ENCODE measurements at regions of chr13 and their contacts with region 1.

Region 1: DNA sequence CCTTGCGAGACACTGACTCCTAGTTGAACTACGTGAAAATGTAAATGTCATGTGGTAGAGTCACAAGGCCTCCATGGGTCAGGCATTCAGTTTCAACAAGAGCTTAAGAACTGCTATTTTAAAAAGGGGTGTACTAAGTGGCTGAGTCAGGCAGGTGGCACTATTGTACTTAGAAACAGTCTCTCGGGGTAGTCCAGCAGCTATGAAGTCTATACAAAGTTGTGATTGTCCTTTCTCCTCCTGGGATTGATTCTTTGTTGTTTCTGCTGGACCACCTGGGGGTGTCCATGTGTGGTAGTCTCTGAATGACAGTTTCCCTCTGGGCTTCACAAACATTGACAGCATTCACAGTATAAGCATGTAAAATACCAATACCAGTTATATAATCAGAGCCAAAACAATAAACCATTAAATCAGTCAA is 33.0 kb downstream of the UGGT2 start:
- DNase-seq: peak; percentile 75
- ATAC-seq: peak; percentile 96
- H3K4me3 ChIP-seq: no peak overlapping the region
- H3K27ac ChIP-seq: no peak overlapping the region
- H3K4me1 ChIP-seq: peaks cover 16% of the 10 kb centered on the region
- H3K27me3 ChIP-seq: no peaks in the 10 kb centered on the region
- CTCF ChIP-seq: peak; percentile 83
- EP300 ChIP-seq: no peak
- POLR2A ChIP-seq: no peak
- RAD21 ChIP-seq: peak; percentile 74

Region 2: DNA sequence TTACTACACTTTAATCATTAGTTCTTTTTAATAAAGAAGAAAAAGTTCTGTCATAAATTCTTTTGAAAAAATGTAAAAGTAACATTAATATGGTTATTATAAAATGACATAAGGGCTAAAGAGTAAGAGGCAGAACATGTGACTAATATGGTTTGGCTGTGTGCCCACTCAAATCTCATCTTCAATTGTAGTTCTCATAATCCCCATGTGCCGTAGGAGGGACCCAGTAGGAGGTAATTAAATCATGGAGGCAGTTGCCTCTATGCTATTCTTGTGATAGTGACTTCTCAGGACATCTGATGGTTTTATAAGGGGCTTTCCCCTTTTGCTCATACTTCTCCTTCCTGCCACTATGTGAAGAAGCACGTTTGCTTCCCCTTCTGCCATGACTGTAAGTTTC is 71.5 kb before region 1 on chr13:
- CTCF ChIA-PET with region 1: no interaction called
- POLR2A ChIA-PET with region 1: no interaction called
- in situ Hi-C with region 1: no loop called
- intact Hi-C with region 1: no loop called
- DNase-seq: no peak
- ATAC-seq: no peak
- H3K4me3 ChIP-seq: no peak overlapping the region
- H3K27ac ChIP-seq: no peak overlapping the region
- H3K4me1 ChIP-seq: no peaks in the 10 kb centered on the region
- H3K27me3 ChIP-seq: no peaks in the 10 kb centered on the region
- CTCF ChIP-seq: no peak
- EP300 ChIP-seq: no peak
- POLR2A ChIP-seq: no peak
- RAD21 ChIP-seq: no peak

Region 3: GRCh38 chr13:96041326-96042110 is 21.4 kb after region 1 on chr13:
- CTCF ChIA-PET with region 1: no interaction called
- POLR2A ChIA-PET with region 1: no interaction called
- in situ Hi-C with region 1: no loop called
- intact Hi-C with region 1: no loop called
- DNase-seq: peak; percentile 4
- ATAC-seq: no peak; the same call in 2 of the 3 replicates
- H3K4me3 ChIP-seq: no peak overlapping the region
- H3K27ac ChIP-seq: no peak overlapping the region
- H3K4me1 ChIP-seq: 0 out of 2 replicates have a peak, but pooled peaks cover 8% of the 10 kb centered on the region
- H3K27me3 ChIP-seq: no peaks in the 10 kb centered on the region
- CTCF ChIP-seq: no peak
- EP300 ChIP-seq: no peak
- POLR2A ChIP-seq: no peak
- RAD21 ChIP-seq: no peak

Region 4: DNA sequence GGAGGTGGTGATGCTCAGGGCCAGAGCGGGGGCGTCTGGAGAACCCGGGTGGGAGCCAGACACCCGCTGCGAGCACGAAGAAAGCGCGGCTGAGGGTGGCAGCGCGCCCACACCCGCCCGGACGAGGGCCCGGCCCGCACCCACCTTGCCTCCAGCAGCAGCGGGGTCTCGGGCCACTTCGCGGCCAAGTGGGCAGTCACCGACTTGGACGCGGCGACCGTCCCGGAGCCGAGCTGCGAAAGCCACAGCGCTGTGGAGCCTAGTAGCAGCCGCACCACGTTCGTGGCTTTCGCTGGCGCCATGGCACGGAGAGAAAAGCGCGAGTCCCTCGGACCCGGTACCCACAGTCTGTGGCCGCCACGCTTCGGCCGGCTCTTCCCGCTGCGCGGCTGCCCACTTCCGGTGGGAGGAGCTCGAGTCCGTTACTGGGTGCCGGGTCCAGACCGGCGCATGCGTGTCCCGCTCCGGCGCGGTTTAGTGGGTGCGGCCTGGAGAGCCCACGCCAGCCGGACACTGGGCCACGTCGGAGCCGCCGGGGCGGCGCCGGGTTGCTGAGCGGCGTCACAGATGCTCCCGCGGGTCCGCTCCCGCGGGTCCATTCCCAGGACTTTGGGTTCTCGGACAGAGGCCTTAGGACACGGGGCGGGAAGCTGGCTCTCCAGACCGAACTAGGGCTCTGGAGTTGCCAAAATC is 33.0 kb after region 1 on chr13 and contains the start of gene UGGT2:
- CTCF ChIA-PET with region 1: no interaction called
- POLR2A ChIA-PET with region 1: interaction called, 11 read pairs
- in situ Hi-C with region 1: no loop called
- intact Hi-C with region 1: no loop called
- DNase-seq: peak; percentile 85
- ATAC-seq: peak; percentile 99
- H3K4me3 ChIP-seq: peak within 1 kb of the TSS; percentile 91 to 100 (median 97)
- H3K27ac ChIP-seq: peak within 1 kb of the TSS; percentile 68
- H3K4me1 ChIP-seq: peaks cover 8% of the 10 kb centered on the region
- H3K27me3 ChIP-seq: no peaks in the 10 kb centered on the region; a peak in 1 of 5 replicates
- CTCF ChIP-seq: peak; percentile 33
- EP300 ChIP-seq: 0 out of 4 replicates have a peak, but pooled peaks of 1 of the 2 experiments have one; percentile 44
- POLR2A ChIP-seq: peak; percentile 87 to 91
- RAD21 ChIP-seq: peak; percentile 40; the same call in 1 of the 2 replicates
- total RNA-seq, gene UGGT2: 14.9 and 27.1 TPM in 2 replicates

Region 5: GRCh38 chr13:96075953-96076543 is 55.9 kb after region 1 on chr13:
- CTCF ChIA-PET with region 1: interaction called, 14 read pairs
- POLR2A ChIA-PET with region 1: no interaction called
- in situ Hi-C with region 1: no loop called
- intact Hi-C with region 1: loop called (anchors 1 kb)
- DNase-seq: peak; percentile 12
- ATAC-seq: peak; percentile 33; the same call in 2 of the 3 replicates
- H3K4me3 ChIP-seq: no peak overlapping the region
- H3K27ac ChIP-seq: no peak overlapping the region
- H3K4me1 ChIP-seq: no peaks in the 10 kb centered on the region
- H3K27me3 ChIP-seq: no peaks in the 10 kb centered on the region
- CTCF ChIP-seq: peak; percentile 37
- EP300 ChIP-seq: no peak
- POLR2A ChIP-seq: no peak
- RAD21 ChIP-seq: no peak

Region 6: GRCh38 chr13:96119921-96120320 is 99.8 kb after region 1 on chr13:
- CTCF ChIA-PET with region 1: no interaction called
- POLR2A ChIA-PET with region 1: no interaction called
- in situ Hi-C with region 1: no loop called
- intact Hi-C with region 1: no loop called
- DNase-seq: no peak
- ATAC-seq: no peak
- H3K4me3 ChIP-seq: no peak overlapping the region
- H3K27ac ChIP-seq: no peak overlapping the region
- H3K4me1 ChIP-seq: no peaks in the 10 kb centered on the region
- H3K27me3 ChIP-seq: no peaks in the 10 kb centered on the region; a peak in 2 of 5 replicates
- CTCF ChIP-seq: no peak
- EP300 ChIP-seq: no peak
- POLR2A ChIP-seq: no peak
- RAD21 ChIP-seq: no peak

Region 7: GRCh38 chr13:96229356-96229755 is 209.2 kb after region 1 on chr13:
- CTCF ChIA-PET with region 1: interaction called, 18 read pairs
- POLR2A ChIA-PET with region 1: no interaction called
- in situ Hi-C with region 1: loop called (anchors 10 kb)
- intact Hi-C with region 1: loop called (anchors 1 kb)
- DNase-seq: peak; percentile 21
- ATAC-seq: peak; percentile 90
- H3K4me3 ChIP-seq: no peak overlapping the region
- H3K27ac ChIP-seq: no peak overlapping the region
- H3K4me1 ChIP-seq: no peaks in the 10 kb centered on the region
- H3K27me3 ChIP-seq: no peaks in the 10 kb centered on the region
- CTCF ChIP-seq: peak; percentile 55
- EP300 ChIP-seq: no peak
- POLR2A ChIP-seq: no peak
- RAD21 ChIP-seq: no peak

Region 8: GRCh38 chr13:96817336-96817941 is 797.3 kb after region 1 on chr13:
- CTCF ChIA-PET with region 1: interaction called, 6 read pairs
- POLR2A ChIA-PET with region 1: interaction called, 3 read pairs
- in situ Hi-C with region 1: no loop called
- intact Hi-C with region 1: loop called (anchors 1 kb)
- DNase-seq: peak; percentile 6
- ATAC-seq: no peak
- H3K4me3 ChIP-seq: no peak overlapping the region
- H3K27ac ChIP-seq: no peak overlapping the region
- H3K4me1 ChIP-seq: no peaks in the 10 kb centered on the region
- H3K27me3 ChIP-seq: no peaks in the 10 kb centered on the region
- CTCF ChIP-seq: no peak
- EP300 ChIP-seq: no peak
- POLR2A ChIP-seq: no peak
- RAD21 ChIP-seq: 0 out of 2 replicates have a peak, but pooled peaks have one; percentile 13

Region 9: DNA sequence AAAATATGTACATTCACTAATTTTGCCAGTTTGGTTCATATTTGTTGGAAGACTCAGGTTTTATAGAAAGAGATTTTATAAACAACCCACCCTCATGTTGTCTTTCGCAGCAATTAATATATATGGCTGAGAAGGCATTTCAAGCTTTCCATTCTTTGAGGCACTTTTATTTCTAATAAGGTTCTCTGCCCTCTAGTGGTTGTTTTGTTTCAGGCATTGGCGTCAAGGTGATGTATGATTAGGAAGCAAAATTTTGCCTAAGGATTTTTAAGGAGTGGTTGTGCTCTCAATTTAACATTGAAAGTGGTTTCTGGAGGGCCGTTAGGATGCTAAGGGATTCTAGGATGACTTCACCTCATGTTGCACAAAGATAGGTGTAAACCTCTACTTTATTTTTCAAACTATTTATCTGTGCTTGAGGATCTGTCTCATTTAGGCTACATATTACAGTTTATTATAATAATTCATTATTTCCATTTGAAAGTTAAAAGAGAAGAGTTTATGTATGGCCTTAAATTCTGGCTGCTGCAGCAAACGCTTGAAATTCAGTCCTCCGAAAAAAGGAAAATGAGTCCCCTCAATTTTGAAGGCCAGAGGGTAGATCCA is 938.2 kb after region 1 on chr13:
- CTCF ChIA-PET with region 1: interaction called, 6 read pairs
- POLR2A ChIA-PET with region 1: no interaction called
- in situ Hi-C with region 1: loop called (anchors 25 kb)
- intact Hi-C with region 1: loop called (anchors 2 kb)
- DNase-seq: peak; percentile 20
- ATAC-seq: peak; percentile 36; the same call in 1 of the 3 replicates
- H3K4me3 ChIP-seq: no peak overlapping the region
- H3K27ac ChIP-seq: no peak overlapping the region
- H3K4me1 ChIP-seq: no peaks in the 10 kb centered on the region
- H3K27me3 ChIP-seq: no peaks in the 10 kb centered on the region
- CTCF ChIP-seq: peak; percentile 56
- EP300 ChIP-seq: no peak
- POLR2A ChIP-seq: no peak
- RAD21 ChIP-seq: no peak

Region 10: DNA sequence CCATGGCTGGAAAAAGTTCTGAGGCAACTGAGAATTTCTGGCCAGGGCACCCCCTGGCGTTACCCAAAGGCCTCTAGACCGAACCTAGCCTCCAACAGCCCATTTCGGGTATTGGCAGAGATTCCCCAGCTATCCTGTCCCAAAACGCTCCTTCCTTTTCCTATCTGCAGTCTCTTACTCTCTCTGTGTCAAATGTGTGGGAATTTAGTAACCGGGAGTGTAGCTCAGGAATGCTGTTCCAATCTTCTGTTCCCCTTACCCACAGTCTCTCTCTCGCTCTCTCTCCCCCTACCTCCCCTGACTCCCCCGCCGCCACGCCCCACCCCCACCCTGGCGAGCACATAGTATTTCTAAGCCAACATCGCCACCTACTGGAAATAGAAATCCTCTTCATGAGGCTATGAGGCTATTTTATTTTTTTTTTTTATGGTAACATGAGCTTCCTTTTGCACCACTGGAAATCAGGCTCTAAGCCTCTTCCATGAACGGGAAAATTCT is 947.1 kb after region 1 on chr13:
- CTCF ChIA-PET with region 1: interaction called, 9 read pairs
- POLR2A ChIA-PET with region 1: no interaction called
- in situ Hi-C with region 1: loop called (anchors 25 kb)
- intact Hi-C with region 1: loop called (anchors 1 kb)
- DNase-seq: peak; percentile 25
- ATAC-seq: peak; percentile 92
- H3K4me3 ChIP-seq: peak overlapping the region in 1 of 3 experiments; percentile 33; a peak in 3 of 6 replicates
- H3K27ac ChIP-seq: no peak overlapping the region
- H3K4me1 ChIP-seq: 0 out of 2 replicates have a peak, but pooled peaks cover 7% of the 10 kb centered on the region
- H3K27me3 ChIP-seq: no peaks in the 10 kb centered on the region; a peak in 2 of 5 replicates
- CTCF ChIP-seq: peak; percentile 52
- EP300 ChIP-seq: no peak
- POLR2A ChIP-seq: no peak
- RAD21 ChIP-seq: no peak

Measured in HepG2 (cell line).